ENCODE measurements at regions of chr5 and their contacts with region 1.

Region 1: GRCh38 chr5:157596487-157596886 is 20.9 kb upstream of the ADAM19 start:
- DNase-seq: peak; percentile 94
- H3K4me3 ChIP-seq: peak overlapping the region; percentile 18
- H3K27ac ChIP-seq: peak overlapping the region; percentile 83
- H3K4me1 ChIP-seq: peaks cover 96% of the 10 kb centered on the region
- CTCF ChIP-seq: no peak

Region 2: GRCh38 chr5:155978850-155979249 is 1617.6 kb before region 1 on chr5:
- CTCF ChIA-PET with region 1: no interaction called
- POLR2A ChIA-PET with region 1: no interaction called
- intact Hi-C with region 1: no loop called
- DNase-seq: no peak
- H3K4me3 ChIP-seq: no peak overlapping the region
- H3K27ac ChIP-seq: no peak overlapping the region
- H3K4me1 ChIP-seq: no peaks in the 10 kb centered on the region
- CTCF ChIP-seq: no peak

Region 3: GRCh38 chr5:157611571-157612476 is 15.3 kb after region 1 on chr5:
- CTCF ChIA-PET with region 1: no interaction called
- POLR2A ChIA-PET with region 1: interaction called, 13 read pairs
- intact Hi-C with region 1: no loop called
- DNase-seq: no peak
- H3K4me3 ChIP-seq: no peak overlapping the region
- H3K27ac ChIP-seq: no peak overlapping the region
- H3K4me1 ChIP-seq: peaks cover 9% of the 10 kb centered on the region
- CTCF ChIP-seq: no peak